Adrenal gland (tissue), 19 donors: ENCODE measurements at regions of chr12 and their contacts with region 1.

Region 1: GRCh38 chr12:46372544-46373110 is at the start of gene SLC38A2:
- DNase-seq: peak; percentile 97 to 99 (median 98)
- H3K4me3 ChIP-seq: peak within 1 kb of the TSS; percentile 86 to 99 (median 92)
- H3K27ac ChIP-seq: peak within 1 kb of the TSS; percentile 94 to 99 (median 98)
- H3K4me1 ChIP-seq: peaks cover 23 to 34% of the 10 kb centered on the region in 2 donors
- H3K27me3 ChIP-seq: no peaks in the 10 kb centered on the region
- CTCF ChIP-seq: peak in 1 of 6 experiments; percentile 6
- POLR2A ChIP-seq: peak; percentile 100
- total RNA-seq, gene SLC38A2: 128 to 948 (median 322) TPM

Region 2: GRCh38 chr12:46147144-46147543 is 225.5 kb before region 1 on chr12:
- intact Hi-C with region 1: no loop called
- DNase-seq: no peak
- H3K4me3 ChIP-seq: no peak overlapping the region
- H3K27ac ChIP-seq: no peak overlapping the region
- H3K4me1 ChIP-seq: no peaks in the 10 kb centered on the region
- H3K27me3 ChIP-seq: no peaks in the 10 kb centered on the region
- CTCF ChIP-seq: no peak
- POLR2A ChIP-seq: no peak

Region 3: GRCh38 chr12:46282829-46283228 is 89.8 kb before region 1 on chr12:
- intact Hi-C with region 1: no loop called
- DNase-seq: no peak
- H3K4me3 ChIP-seq: no peak overlapping the region
- H3K27ac ChIP-seq: no peak overlapping the region
- H3K4me1 ChIP-seq: no peaks in the 10 kb centered on the region
- H3K27me3 ChIP-seq: no peaks in the 10 kb centered on the region
- CTCF ChIP-seq: no peak
- POLR2A ChIP-seq: no peak

Region 4: DNA sequence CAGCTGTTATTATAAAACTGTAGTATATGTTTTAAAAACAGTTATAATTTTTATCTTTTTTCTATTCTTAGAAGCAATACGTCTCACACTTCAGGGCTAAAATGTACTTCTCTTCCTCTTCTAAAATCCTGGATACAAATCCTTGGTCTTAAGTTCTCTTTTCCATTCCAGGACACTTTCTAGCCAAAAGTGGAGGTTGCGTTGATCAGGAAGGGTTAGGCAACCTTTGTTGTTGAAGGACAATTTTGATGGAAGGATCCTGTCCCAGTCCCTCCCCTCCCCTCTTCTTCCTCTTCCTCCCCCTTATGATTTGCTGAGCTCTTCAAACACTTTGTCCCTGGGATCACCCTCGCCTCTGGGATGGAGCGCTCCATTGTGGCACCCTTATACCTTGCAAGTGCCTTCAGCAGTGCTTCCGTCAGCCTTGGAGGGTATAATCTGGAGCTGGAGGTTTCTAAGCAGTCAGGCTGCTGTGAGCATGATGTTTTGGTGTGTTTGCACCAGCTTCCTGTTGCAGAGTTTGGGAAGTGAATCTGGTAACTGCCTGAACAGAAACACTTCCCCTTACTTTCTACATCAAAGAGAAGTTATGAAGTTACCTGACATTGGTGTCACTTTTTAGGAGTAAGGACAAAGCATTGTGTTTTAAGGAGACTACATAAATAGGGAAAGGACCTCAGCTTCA is 87.4 kb after region 1 on chr12:
- intact Hi-C with region 1: no loop called
- DNase-seq: no peak
- H3K4me3 ChIP-seq: no peak overlapping the region
- H3K27ac ChIP-seq: peak overlapping the region in 3 of 5 donors; percentile 29 to 66 (median 42)
- H3K4me1 ChIP-seq: peaks cover 3 to 33% of the 10 kb centered on the region in 2 donors
- H3K27me3 ChIP-seq: no peaks in the 10 kb centered on the region
- CTCF ChIP-seq: no peak
- POLR2A ChIP-seq: no peak

Region 5: DNA sequence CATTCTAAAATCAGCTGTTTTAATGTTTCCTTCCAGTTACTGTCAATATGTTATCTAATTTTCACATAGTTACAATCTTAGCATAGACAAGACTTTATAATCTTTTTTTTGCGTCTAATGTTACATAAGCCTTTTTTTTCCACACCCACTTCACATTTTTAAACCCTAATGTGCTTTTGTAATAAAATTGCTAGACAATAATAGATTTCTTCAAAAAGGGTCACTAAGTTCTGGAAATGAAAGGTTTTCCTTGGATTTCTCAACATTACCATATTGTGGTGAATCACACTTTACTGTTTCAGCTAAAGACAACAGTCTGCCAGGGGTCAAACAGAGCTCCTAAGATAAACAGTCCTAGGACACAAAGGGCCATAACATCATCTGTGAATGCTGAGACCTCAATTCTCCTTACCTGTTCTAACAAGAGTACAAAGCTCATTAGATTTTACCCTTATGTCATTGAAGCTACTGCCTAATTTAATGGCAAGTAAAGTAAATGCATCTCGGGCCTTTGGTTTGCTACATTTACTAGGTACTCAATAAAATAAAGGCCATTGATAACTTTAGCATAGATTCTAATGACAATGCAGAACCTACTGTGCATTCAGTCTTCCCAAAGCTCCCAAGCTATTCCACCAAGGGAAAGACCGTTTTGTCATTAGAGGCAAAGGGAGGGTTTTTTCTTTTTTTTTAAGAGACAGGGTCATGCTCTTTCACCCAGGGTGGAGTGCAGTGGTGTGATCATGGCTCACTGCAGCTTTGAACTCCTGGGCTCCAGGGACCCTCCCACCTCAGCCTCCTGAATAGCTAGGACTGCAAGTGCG is 111.2 kb after region 1 on chr12:
- intact Hi-C with region 1: loop called in 1 of 2 experiments (anchors 10 kb)
- DNase-seq: peak in 3 of 7 donors; percentile 29 to 62 (median 36)
- H3K4me3 ChIP-seq: no peak overlapping the region
- H3K27ac ChIP-seq: peak overlapping the region; percentile 23 to 55 (median 41)
- H3K4me1 ChIP-seq: peaks cover 0 to 12% of the 10 kb centered on the region in 2 donors
- H3K27me3 ChIP-seq: no peaks in the 10 kb centered on the region
- CTCF ChIP-seq: no peak
- POLR2A ChIP-seq: no peak

Region 6: GRCh38 chr12:46562625-46563228 is 190.1 kb after region 1 on chr12:
- intact Hi-C with region 1: loop called in 1 of 2 experiments (anchors 10 kb)
- DNase-seq: peak in 4 of 7 donors; percentile 30 to 49 (median 36)
- H3K4me3 ChIP-seq: no peak overlapping the region
- H3K27ac ChIP-seq: peak overlapping the region in 2 of 5 donors; percentile 13 to 14
- H3K4me1 ChIP-seq: peaks cover 7 to 14% of the 10 kb centered on the region in 2 donors
- H3K27me3 ChIP-seq: no peaks in the 10 kb centered on the region
- CTCF ChIP-seq: no peak
- POLR2A ChIP-seq: no peak

Region 7: GRCh38 chr12:46661110-46661845 is 288.7 kb after region 1 on chr12:
- intact Hi-C with region 1: loop called in 1 of 2 experiments (anchors 5 kb)
- DNase-seq: peak in 6 of 7 donors; percentile 32 to 56 (median 38)
- H3K4me3 ChIP-seq: no peak overlapping the region
- H3K27ac ChIP-seq: peak overlapping the region in 2 of 5 donors; percentile 45 to 52
- H3K4me1 ChIP-seq: peaks cover 0 to 50% of the 10 kb centered on the region in 2 donors
- H3K27me3 ChIP-seq: no peaks in the 10 kb centered on the region
- CTCF ChIP-seq: peak; percentile 73 to 94 (median 86)
- POLR2A ChIP-seq: no peak